Posterior vena cava (tissue), 2 donors: ENCODE measurements at regions of chr6 and their contacts with region 1.

Region 1: GRCh38 chr6:56542364-56543331 is 100.0 kb downstream of the DST start:
- DNase-seq: peak; percentile 97

Region 2: DNA sequence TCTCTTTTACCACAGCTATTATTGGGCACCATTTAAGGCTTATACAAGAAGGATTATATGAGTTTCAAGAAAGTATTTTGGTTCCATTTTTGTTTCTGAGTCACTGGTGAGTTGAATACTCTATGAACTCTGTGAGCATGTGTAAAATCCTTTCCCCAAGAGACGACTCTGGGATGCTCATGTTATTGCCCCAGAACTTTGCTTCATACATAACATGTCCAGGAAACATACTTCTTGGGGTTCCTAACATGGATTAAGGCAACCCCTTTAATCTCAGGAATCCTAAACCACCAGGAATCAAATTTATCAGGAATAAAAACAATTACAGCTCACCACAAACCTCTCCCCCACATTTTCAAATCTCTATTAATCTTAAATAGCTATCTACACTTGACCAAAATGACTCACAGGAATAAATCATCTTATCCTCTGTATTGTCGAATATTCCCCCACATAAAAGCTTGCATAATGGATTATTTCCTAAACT is 177.8 kb before region 1 on chr6:
- intact Hi-C with region 1: loop called (anchors 1 to 5 kb)
- DNase-seq: no peak

Region 3: GRCh38 chr6:56370561-56371211 is 172.0 kb before region 1 on chr6:
- intact Hi-C with region 1: loop called in 1 of 2 experiments (anchors 5 kb)
- DNase-seq: no peak

Region 4: DNA sequence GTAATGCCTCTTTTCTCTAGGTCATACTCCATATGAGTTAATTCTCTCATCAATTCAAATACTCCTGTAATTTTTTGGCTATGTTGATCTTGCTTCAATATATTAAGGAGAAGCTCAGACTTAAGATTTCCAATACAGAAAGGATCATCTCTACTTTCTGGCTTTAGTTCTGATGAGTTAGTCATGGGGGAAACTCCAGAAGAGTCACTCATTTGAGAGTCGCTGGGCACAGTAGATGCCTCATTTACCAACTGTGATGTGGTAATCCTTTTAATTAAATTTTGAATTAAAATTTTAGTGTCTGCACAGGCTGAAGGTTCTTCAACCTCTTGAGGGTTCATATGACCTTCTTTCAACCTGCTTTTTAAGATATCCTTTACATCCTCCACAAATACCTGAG is 61.5 kb after region 1 on chr6:
- intact Hi-C with region 1: no loop called
- DNase-seq: no peak